CD14-positive monocyte (primary cell): ENCODE measurements at regions of chr11 and their contacts with region 1.

Region 1: DNA sequence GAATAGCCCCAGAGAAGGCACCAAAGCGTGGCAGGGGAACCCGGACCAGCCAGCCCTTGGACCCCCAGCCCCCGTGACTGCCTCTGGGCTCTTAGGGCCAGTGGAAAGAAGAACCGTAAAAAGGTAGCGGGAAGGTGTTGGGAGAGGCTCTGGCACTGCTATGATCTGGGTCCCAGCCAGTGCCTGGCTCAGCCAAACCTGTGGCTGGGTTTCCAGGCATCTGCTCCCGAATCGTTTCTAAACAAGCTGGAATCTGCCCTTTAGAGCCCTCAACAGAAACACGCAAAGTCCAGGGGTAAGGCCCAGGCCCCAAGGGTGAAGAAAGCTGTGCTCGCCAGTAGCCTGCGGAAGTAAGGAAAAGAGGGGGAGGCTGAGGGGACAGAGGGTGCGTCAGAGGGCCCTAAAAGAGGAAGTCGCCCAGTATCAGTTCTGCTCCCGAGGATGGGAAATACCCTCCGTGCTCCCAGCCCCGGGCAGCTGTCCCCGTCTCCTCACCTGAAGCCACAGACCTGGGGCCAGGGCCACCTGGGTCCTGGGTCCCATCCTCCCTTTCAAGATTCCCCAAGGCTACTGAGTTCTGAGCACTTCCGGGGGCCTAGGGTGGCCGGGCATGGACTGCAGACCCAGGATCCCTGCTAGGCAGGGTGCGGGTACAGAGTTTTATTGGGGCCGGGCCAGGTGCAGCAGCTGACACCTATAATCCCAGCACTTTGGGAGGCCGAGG is 24.7 kb downstream of the IL10RA start:
- DNase-seq: peak; percentile 95 to 98 (median 95)
- H3K4me3 ChIP-seq: peak overlapping the region in 1 of 3 experiments; percentile 33
- H3K4me3 Mint-ChIP-seq: peak overlapping the region; percentile 39 to 62
- H3K27ac ChIP-seq: peak overlapping the region; percentile 98 to 99
- H3K27ac Mint-ChIP-seq: peak overlapping the region; percentile 95 to 99 (median 98)
- H3K4me1 ChIP-seq: peaks cover 93 to 99% of the 10 kb centered on the region in 2 donors
- H3K4me1 Mint-ChIP-seq: peaks cover 97% of the 10 kb centered on the region
- H3K27me3 ChIP-seq: no peaks in the 10 kb centered on the region
- H3K27me3 Mint-ChIP-seq: no peaks in the 10 kb centered on the region
- CTCF ChIP-seq: no peak

Region 2: GRCh38 chr11:117970400-117971024 is 40.4 kb before region 1 on chr11:
- intact Hi-C with region 1: loop called in 1 of 2 experiments (anchors 5 kb)
- DNase-seq: peak; percentile 77 to 91 (median 88)
- H3K4me3 ChIP-seq: peak overlapping the region in 1 of 3 experiments; percentile 53
- H3K4me3 Mint-ChIP-seq: peak overlapping the region; percentile 58 to 85
- H3K27ac ChIP-seq: peak overlapping the region; percentile 33 to 82
- H3K27ac Mint-ChIP-seq: peak overlapping the region; percentile 84 to 98 (median 93)
- H3K4me1 ChIP-seq: peaks cover 73 to 82% of the 10 kb centered on the region in 2 donors
- H3K4me1 Mint-ChIP-seq: peaks cover 74% of the 10 kb centered on the region
- H3K27me3 ChIP-seq: no peaks in the 10 kb centered on the region
- H3K27me3 Mint-ChIP-seq: peaks cover 0 to 4% (median 0%) of the 10 kb centered on the region in 3 donors
- CTCF ChIP-seq: no peak

Region 3: GRCh38 chr11:117997823-117998579 is 12.9 kb before region 1 on chr11:
- intact Hi-C with region 1: loop called in 1 of 2 experiments (anchors 1 kb)
- DNase-seq: no peak
- H3K4me3 ChIP-seq: no peak overlapping the region
- H3K4me3 Mint-ChIP-seq: no peak overlapping the region
- H3K27ac ChIP-seq: peak overlapping the region; percentile 76 to 95
- H3K27ac Mint-ChIP-seq: peak overlapping the region; percentile 9 to 96 (median 88)
- H3K4me1 ChIP-seq: peaks cover 85 to 100% of the 10 kb centered on the region in 2 donors
- H3K4me1 Mint-ChIP-seq: peaks cover 86% of the 10 kb centered on the region
- H3K27me3 ChIP-seq: no peaks in the 10 kb centered on the region
- H3K27me3 Mint-ChIP-seq: peaks cover 0 to 2% (median 0%) of the 10 kb centered on the region in 3 donors
- CTCF ChIP-seq: no peak

Region 4: DNA sequence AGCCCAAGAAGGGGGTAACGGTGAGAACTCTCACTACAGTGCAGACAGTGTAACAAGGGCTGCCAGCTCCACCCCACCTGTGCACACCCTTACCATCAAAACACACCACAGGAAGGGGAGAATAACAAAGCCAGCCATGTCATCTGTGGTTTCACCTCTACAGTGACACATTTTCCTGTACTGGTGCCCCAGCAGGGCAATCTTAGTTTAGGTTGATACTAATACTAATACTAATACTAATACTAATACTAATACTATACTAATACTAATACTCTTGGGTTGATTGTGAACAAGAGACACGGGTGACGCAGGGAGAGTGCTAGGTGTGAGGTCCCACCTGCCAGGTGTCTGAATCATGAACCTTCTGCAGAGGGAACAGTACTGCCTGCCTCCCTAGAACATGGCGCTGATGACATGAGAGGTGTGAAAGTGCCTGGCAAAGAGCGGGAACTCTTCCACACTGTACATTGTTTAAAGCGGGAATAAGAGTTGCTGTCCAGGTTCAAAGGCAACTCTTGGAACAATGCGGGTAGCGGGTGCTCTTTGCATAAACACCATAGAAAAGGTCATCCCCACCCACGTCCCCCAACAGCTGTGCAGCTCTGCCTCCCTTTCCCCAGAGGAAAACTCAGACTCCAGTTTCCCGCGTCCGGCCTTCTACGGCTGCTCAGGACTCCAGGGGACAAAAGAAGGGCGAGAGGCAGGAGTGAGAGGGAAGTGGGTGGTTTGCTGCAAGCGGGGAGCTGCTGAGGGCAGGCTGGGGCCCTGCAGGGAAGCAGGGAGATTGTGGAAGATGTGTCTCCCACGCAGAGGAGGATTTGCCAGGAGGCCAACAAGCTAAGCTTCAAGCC is 40.9 kb after region 1 on chr11:
- intact Hi-C with region 1: loop called in 1 of 2 experiments (anchors 5 kb)
- DNase-seq: no peak
- H3K4me3 ChIP-seq: no peak overlapping the region
- H3K4me3 Mint-ChIP-seq: no peak overlapping the region
- H3K27ac ChIP-seq: no peak overlapping the region
- H3K27ac Mint-ChIP-seq: peak overlapping the region in 2 of 7 donors; percentile 10 to 43
- H3K4me1 ChIP-seq: peaks cover 13 to 15% of the 10 kb centered on the region in 2 donors
- H3K4me1 Mint-ChIP-seq: peaks cover 28% of the 10 kb centered on the region
- H3K27me3 ChIP-seq: no peaks in the 10 kb centered on the region
- H3K27me3 Mint-ChIP-seq: peaks cover 4 to 6% (median 6%) of the 10 kb centered on the region in 3 donors
- CTCF ChIP-seq: no peak

Region 5: GRCh38 chr11:118088477-118088920 is 77.6 kb after region 1 on chr11:
- intact Hi-C with region 1: loop called in 1 of 2 experiments (anchors 10 kb)
- DNase-seq: peak; percentile 92 to 94 (median 93)
- H3K4me3 ChIP-seq: peak overlapping the region in 1 of 3 experiments; percentile 35
- H3K4me3 Mint-ChIP-seq: peak overlapping the region; percentile 60 to 63
- H3K27ac ChIP-seq: peak overlapping the region; percentile 73 to 92
- H3K27ac Mint-ChIP-seq: peak overlapping the region; percentile 96 to 99 (median 96)
- H3K4me1 ChIP-seq: peaks cover 50 to 59% of the 10 kb centered on the region in 2 donors
- H3K4me1 Mint-ChIP-seq: peaks cover 52% of the 10 kb centered on the region
- H3K27me3 ChIP-seq: no peaks in the 10 kb centered on the region
- H3K27me3 Mint-ChIP-seq: peaks cover 0 to 11% (median 3%) of the 10 kb centered on the region in 3 donors
- CTCF ChIP-seq: no peak